ENCODE measurements at regions of chr9 and their contacts with region 1.

Region 1: GRCh38 chr9:130997925-130998596 is 10.9 kb upstream of the LAMC3 start:
- DNase-seq: peak; percentile 75 to 95
- ATAC-seq: peak; percentile 84 to 96
- H3K4me3 ChIP-seq: no peak overlapping the region
- H3K27ac ChIP-seq: peak overlapping the region; percentile 35 to 46; a peak in 2 of 6 replicates
- H3K4me1 ChIP-seq: peaks cover 26% of the 10 kb centered on the region
- CTCF ChIP-seq: peak; percentile 83
- EP300 ChIP-seq: no peak
- POLR2A ChIP-seq: no peak
- RAD21 ChIP-seq: peak; percentile 94

Region 2: DNA sequence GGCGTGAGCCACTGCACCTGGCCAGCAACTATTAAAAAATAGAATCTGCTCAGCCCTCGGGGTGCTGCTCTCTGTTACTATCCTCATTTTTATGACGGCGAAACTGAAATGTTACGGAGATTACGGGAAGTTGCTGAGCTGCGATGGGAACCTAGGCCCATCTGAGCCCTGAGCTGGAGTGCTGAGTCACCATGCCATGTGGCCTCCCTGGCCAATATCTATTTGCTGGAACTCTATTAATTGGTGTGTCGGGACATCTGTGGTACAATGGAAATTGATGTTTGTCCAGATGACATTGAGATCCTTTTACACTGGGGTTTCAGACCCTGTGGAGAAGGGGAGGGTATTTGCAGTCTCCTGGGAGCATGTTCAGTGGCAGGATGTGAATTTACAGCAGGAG is 325.6 kb before region 1 on chr9:
- CTCF ChIA-PET with region 1: no interaction called
- POLR2A ChIA-PET with region 1: no interaction called
- DNase-seq: no peak
- ATAC-seq: no peak
- H3K4me3 ChIP-seq: no peak overlapping the region
- H3K27ac ChIP-seq: peak overlapping the region in 1 of 2 experiments; percentile 3; a peak in 1 of 6 replicates
- H3K4me1 ChIP-seq: no peaks in the 10 kb centered on the region
- CTCF ChIP-seq: no peak
- EP300 ChIP-seq: no peak
- POLR2A ChIP-seq: no peak
- RAD21 ChIP-seq: no peak

Region 3: GRCh38 chr9:130872912-130873503 is 125.1 kb before region 1 on chr9:
- CTCF ChIA-PET with region 1: interaction called, 286 read pairs
- POLR2A ChIA-PET with region 1: no interaction called
- DNase-seq: no peak
- ATAC-seq: peak in 1 of 2 experiments; percentile 69; a peak in 3 of 6 replicates
- H3K4me3 ChIP-seq: no peak overlapping the region
- H3K27ac ChIP-seq: no peak overlapping the region
- H3K4me1 ChIP-seq: peaks cover 5% of the 10 kb centered on the region; the same call in 1 of the 3 replicates
- CTCF ChIP-seq: no peak
- EP300 ChIP-seq: no peak
- POLR2A ChIP-seq: no peak
- RAD21 ChIP-seq: no peak

Region 4: DNA sequence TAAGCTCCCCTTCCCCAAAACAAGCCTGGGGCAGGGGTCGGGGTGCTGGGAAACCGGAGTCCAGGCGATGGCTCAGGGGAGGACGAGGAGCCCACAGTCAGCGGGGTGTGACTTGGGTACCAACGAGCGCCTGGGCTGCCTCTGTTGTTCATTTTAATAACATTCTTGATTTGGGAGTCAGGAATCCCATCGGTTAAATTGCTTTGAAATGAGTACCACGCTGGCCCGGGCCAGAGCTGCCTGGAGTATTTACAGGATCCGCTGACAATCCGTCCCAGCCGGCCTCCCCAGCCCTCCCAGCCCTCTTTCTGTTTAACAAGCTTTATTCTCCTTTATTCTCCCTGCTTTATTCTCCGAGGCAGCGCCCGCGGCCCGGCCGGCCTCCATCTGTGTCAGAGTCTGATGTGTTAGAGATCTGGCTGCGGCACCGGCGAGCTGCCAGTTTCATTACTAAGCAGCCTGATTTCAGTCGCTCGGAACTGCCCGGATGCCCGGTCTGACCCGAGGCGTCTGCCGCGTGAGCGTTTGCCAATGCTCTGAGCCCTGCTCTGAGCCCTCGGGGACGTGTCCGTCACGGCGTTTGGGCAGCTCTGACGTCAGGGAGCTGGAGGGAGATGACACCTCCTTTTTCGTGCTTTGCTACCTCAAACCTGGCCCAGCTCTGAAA is 85.0 kb before region 1 on chr9:
- CTCF ChIA-PET with region 1: interaction called, 22 read pairs
- POLR2A ChIA-PET with region 1: no interaction called
- DNase-seq: no peak
- ATAC-seq: no peak
- H3K4me3 ChIP-seq: no peak overlapping the region
- H3K27ac ChIP-seq: no peak overlapping the region
- H3K4me1 ChIP-seq: no peaks in the 10 kb centered on the region
- CTCF ChIP-seq: no peak
- EP300 ChIP-seq: no peak
- POLR2A ChIP-seq: no peak
- RAD21 ChIP-seq: no peak

Region 5: DNA sequence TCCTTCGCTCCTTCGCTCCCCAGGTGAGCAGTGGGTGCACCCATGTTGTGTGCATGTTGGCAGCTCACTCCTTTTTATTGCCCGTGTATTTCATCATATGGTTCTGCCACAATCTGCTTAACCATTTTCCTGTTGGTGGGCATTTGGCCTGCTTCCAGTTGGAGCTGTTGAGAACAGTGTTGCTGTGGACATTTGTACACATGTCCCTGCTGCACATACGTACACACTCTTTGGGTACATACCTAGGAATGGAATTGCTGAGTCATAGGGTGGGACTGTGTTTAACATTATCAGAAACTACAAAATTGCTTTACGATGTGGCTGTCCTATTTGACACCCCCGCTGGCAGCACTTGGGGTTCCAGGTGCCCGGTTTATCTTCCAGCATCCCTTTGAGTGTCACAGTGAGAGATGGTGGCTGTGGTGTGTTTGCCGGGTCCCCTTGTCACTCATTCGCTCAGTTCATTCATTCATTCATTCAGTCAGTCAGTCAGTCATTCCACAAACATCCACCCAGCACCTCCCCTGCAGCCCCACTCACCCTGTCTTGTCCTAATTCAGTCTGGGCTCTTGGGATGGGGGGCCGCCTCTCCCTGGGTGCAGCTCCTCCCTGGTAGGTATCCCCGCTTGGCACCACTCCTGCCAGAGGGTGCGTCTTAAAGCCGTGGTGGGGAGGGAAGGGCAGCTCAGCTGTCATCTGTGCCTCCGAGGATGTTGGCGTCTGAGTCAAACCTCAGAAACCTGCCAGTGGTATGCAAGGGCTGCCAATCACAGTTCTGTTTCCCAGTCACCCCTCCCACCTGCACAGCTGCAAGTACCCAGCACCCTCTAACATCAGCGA is 51.1 kb before region 1 on chr9:
- CTCF ChIA-PET with region 1: interaction called, 78 read pairs
- POLR2A ChIA-PET with region 1: no interaction called
- DNase-seq: peak in 1 of 2 experiments; percentile 67
- ATAC-seq: peak; percentile 42 to 56; a peak in 5 of 6 replicates
- H3K4me3 ChIP-seq: peak overlapping the region; percentile 3; the same call in 1 of the 3 replicates
- H3K27ac ChIP-seq: peak overlapping the region; percentile 71 to 75
- H3K4me1 ChIP-seq: peaks cover 34% of the 10 kb centered on the region
- CTCF ChIP-seq: no peak
- EP300 ChIP-seq: no peak; a peak in 1 of 5 replicates
- POLR2A ChIP-seq: no peak
- RAD21 ChIP-seq: no peak

Region 6: DNA sequence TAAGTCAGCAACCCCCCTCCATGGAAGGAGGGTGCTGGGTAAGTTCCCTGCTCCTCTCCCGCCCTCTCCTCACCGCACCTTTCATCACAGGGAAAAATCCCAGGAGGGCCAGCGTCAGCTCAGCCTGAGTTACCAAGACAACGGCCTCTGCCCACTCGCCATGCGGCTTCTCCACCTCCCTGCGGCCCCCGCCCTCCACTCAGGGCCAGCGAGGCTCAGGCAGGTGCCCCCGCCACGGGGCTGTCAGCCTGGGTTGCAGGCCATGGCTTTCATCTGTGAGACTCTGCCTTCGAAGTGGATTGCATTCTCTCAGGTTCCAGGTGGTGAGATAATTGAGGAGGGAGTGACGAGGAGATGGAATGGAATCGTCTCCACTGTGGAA is 16.3 kb before region 1 on chr9:
- CTCF ChIA-PET with region 1: interaction called, 60 read pairs
- POLR2A ChIA-PET with region 1: no interaction called
- DNase-seq: no peak
- ATAC-seq: no peak
- H3K4me3 ChIP-seq: no peak overlapping the region
- H3K27ac ChIP-seq: no peak overlapping the region
- H3K4me1 ChIP-seq: no peaks in the 10 kb centered on the region
- CTCF ChIP-seq: no peak
- EP300 ChIP-seq: no peak
- POLR2A ChIP-seq: no peak
- RAD21 ChIP-seq: no peak

Region 7: DNA sequence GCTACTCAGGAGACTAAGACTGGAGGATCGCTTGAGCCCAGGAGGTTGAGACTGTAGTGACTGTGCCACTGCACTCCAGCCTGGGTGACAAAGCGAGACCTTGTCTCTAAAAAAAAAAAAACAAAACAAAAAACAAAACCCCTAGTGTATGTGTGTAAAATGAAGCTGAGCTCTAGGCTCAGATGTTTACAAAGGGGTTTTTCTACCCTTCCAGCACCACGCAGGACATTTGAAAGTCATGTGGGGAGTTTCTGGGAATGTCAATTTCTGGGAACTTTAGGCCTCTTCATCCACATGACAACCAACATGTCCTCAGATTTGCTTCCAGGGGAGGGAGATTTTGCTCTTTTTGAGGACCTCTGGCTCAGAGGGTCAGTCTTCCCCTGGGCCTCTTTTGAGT is 55.8 kb after region 1 on chr9:
- CTCF ChIA-PET with region 1: interaction called, 11 read pairs
- POLR2A ChIA-PET with region 1: no interaction called
- DNase-seq: no peak
- ATAC-seq: no peak
- H3K4me3 ChIP-seq: no peak overlapping the region
- H3K27ac ChIP-seq: no peak overlapping the region
- H3K4me1 ChIP-seq: no peaks in the 10 kb centered on the region
- CTCF ChIP-seq: no peak
- EP300 ChIP-seq: no peak
- POLR2A ChIP-seq: no peak
- RAD21 ChIP-seq: no peak

Region 8: DNA sequence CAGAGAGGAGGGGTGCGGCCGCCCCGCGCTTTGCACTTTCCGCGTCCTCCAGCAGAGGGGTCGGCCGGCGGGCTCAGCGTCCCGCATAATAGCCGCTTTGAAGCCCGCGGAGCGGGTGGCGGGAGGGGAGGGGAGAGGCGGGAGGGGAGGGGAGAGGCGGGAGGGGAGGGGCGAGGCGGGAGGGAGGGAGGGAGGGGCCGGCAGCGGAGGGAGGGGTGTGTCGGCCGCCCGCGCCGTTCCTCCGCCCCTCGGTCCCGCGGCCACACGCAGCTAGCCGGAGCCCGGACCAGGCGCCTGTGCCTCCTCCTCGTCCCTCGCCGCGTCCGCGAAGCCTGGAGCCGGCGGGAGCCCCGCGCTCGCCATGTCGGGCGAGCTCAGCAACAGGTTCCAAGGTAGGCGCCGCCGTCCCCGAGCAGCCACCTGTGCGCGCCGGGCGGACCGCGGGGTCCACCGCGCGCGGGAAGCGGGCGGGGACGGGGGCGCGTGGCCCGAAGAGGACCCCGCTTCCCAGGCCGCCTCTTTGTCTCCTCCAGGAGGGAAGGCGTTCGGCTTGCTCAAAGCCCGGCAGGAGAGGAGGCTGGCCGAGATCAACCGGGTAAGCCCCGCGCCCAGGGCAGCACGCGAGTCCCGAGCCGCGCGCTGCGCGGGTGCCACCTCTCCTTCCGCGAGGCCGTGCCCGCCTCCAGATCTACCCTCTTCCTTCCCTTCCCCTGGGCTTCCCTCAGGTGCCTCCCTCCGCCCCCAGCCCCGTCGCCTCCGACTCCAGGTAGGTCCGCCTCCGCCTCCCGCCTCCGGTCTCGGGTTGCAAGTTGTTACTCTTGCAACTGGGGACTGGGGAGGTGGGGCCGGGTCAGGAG is 98.4 kb after region 1 on chr9 and contains the start of gene AIF1L:
- CTCF ChIA-PET with region 1: no interaction called
- POLR2A ChIA-PET with region 1: no interaction called
- DNase-seq: peak; percentile 44 to 81
- ATAC-seq: peak; percentile 55 to 78; a peak in 5 of 6 replicates
- H3K4me3 ChIP-seq: peak within 1 kb of the TSS; percentile 70
- H3K27ac ChIP-seq: peak within 1 kb of the TSS; percentile 45 to 78; a peak in 5 of 6 replicates
- H3K4me1 ChIP-seq: 0 out of 3 replicates have a peak, but pooled peaks cover 7% of the 10 kb centered on the region
- CTCF ChIP-seq: no peak
- EP300 ChIP-seq: no peak
- POLR2A ChIP-seq: no peak
- RAD21 ChIP-seq: no peak
- polyA plus RNA-seq, gene AIF1L: 1.7 and 2.8 TPM in 2 replicates

Region 9: DNA sequence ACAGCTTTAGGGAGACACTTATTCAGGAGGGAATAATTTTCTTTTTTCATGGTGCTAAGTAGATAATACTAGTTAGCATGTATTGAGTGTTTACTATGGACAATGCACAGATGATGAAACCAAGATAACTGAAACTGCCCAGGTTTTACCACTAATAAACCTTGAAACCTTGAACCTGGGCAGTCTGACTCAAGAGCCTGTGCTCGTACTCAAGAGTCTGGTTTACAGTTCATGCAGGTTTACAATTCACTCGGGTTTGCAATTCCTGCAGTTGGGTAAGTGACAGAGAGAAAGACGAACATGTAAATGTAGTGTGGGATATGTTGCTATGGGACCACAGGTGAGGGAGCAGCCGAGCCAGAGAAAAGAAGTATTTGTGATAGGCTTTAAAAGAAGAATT is 155.5 kb after region 1 on chr9:
- CTCF ChIA-PET with region 1: no interaction called
- POLR2A ChIA-PET with region 1: no interaction called
- DNase-seq: no peak
- ATAC-seq: no peak
- H3K4me3 ChIP-seq: no peak overlapping the region
- H3K27ac ChIP-seq: no peak overlapping the region
- H3K4me1 ChIP-seq: no peaks in the 10 kb centered on the region
- CTCF ChIP-seq: no peak
- EP300 ChIP-seq: no peak
- POLR2A ChIP-seq: no peak
- RAD21 ChIP-seq: no peak

Region 10: GRCh38 chr9:131530920-131531832 is 533.1 kb after region 1 on chr9 and contains the start of gene UCK1:
- CTCF ChIA-PET with region 1: no interaction called
- POLR2A ChIA-PET with region 1: no interaction called
- DNase-seq: peak; percentile 83 to 90
- ATAC-seq: peak; percentile 88 to 93
- H3K4me3 ChIP-seq: peak within 1 kb of the TSS; percentile 100
- H3K27ac ChIP-seq: peak within 1 kb of the TSS; percentile 98 to 99
- H3K4me1 ChIP-seq: peaks cover 11% of the 10 kb centered on the region
- CTCF ChIP-seq: no peak
- EP300 ChIP-seq: no peak
- POLR2A ChIP-seq: peak; percentile 54
- RAD21 ChIP-seq: no peak
- polyA plus RNA-seq, gene UCK1: 18.0 and 19.7 TPM in 2 replicates

Measured in A549 (cell line).